ENCODE measurements at regions of chr1 and their contacts with region 1.

Region 1: DNA sequence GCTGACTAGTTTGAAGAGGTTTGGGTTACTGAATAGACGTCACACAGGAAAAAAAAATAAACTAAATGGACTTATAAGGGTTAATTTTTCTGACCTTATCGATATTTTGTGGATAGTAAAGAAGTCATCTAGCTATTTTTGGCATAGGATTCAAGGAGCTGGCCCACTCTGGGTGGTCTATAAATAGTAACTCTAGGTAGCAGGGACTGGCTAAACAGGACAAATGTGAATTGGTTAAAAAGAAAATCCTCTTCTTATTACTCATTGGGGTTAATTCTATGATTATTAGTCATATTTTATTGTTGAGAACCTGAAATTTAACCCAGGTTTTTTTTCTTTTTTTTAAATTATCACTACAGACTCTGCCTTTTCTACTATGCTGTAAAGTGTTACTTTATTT is 61.7 kb downstream of the ATF6 start:
- DNase-seq: no peak
- ATAC-seq: no peak
- H3K4me3 ChIP-seq: no peak overlapping the region
- H3K27ac ChIP-seq: no peak overlapping the region
- H3K4me1 ChIP-seq: no peaks in the 10 kb centered on the region
- H3K27me3 ChIP-seq: no peaks in the 10 kb centered on the region
- CTCF ChIP-seq: no peak

Region 2: DNA sequence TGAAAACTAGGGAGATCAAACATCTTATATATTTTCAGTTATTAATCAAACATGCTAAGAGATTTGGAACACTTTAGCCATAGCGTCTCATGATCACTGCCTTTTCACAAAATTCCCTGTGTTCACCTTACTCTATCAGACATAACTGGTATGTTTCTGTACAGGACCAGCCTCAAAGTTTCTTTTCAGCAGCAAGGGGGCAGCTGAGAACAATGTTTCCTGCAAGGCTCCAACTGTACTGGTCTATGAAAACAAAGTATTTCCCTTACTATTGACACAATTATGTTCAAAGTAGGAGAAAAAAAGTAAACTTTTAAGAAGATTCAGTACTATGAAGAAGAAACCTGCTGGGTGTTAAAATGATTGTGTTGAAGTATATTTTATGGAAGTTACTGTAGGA is 36.8 kb after region 1 on chr1:
- CTCF ChIA-PET with region 1: interaction called, 11 read pairs
- POLR2A ChIA-PET with region 1: no interaction called
- in situ Hi-C with region 1: no loop called
- intact Hi-C with region 1: no loop called
- DNase-seq: no peak
- ATAC-seq: no peak; the same call in 1 of the 2 replicates
- H3K4me3 ChIP-seq: no peak overlapping the region
- H3K27ac ChIP-seq: no peak overlapping the region
- H3K4me1 ChIP-seq: no peaks in the 10 kb centered on the region
- H3K27me3 ChIP-seq: no peaks in the 10 kb centered on the region
- CTCF ChIP-seq: peak; percentile 16; the same call in 1 of the 2 replicates